GM18951 (cell line): ENCODE measurements at regions of chrX and their contacts with region 1.

Region 1: DNA sequence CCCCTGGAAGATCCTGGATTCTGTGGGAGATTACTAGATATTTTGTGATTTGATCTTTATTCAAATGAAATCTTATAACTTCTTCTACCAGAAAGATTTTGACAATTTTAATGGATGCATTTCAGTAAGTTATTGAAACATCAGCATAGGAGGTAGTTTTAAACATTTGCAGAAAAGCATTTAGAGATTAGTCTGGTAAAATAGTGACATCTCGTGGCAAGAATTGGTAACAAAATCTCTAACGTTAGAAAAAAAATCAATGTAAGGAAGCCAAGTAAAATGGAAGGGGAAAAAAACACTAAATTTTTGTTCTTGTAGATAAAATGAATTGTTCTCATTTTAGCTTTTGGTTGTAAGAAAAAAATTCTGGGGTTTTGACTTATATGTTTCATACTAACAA is 73.3 kb downstream of the TASL start:
- POLR2A ChIP-seq: no peak

Region 2: GRCh38 chrX:30141966-30142365 is 362.3 kb before region 1 on chrX:
- in situ Hi-C with region 1: loop called (anchors 25 kb)
- POLR2A ChIP-seq: no peak

Region 3: DNA sequence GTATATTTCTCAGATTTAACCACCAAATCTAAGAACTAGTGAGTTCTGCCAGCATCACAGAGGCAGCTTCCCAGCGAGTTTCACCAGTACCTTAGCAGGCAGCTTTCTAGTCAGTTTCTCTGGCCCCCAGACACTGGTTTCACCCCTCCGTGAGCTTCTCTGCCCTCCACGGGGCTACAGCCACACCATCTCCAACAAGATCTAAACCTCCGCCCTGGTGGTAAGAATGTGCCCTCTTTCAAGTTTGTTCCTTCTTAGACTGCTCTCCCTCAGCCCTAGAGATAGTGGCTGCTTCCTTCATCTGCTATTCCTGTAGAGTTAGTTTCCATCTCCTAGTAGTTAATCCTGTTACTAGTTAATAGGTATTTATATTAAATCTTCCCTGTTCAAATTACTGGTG is 445.2 kb after region 1 on chrX:
- in situ Hi-C with region 1: no loop called
- POLR2A ChIP-seq: no peak